ENCODE measurements at regions of chr2 and their contacts with region 1.

Region 1: DNA sequence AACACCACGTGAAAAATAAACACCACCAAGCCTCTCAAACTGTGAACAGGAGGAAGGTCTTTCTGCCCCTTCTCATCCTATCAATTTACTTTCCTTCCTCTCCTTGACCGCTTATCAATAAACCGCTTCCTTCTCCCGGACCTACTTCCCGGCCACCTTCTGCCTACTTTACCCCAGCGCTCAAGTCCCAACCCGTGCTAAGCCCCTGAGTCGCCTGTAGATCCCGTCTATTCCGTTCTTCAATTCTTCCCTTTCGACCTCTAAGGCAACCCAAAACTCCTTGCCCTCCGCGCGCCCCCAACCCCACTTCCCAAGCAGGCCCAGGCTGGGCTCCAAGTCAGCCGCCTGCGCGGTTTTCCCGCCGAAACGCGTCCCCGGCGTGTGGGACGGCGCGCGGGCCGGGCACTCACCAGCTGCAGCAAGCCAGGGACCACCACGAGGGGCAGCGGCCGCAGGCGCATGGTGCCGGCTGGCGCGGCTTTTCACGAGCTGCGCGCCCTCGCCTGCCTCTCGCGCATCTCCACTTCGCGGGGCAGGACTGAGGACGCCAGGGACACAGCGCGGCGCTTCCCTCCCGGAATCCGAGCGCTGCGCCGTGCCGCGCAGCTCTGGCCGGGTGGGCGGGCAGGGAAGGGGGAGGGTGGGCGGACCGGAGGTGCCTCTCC is at the start of gene NXPH2:
- DNase-seq: peak in 2 of 6 donors; percentile 52 to 61
- ATAC-seq: peak in 3 of 4 donors; percentile 46 to 57 (median 53)
- H3K4me3 ChIP-seq: peak within 1 kb of the TSS; percentile 7 to 48 (median 20)
- H3K27ac ChIP-seq: no peak within 1 kb of the TSS
- H3K4me1 ChIP-seq: peaks cover 0 to 5% (median 0%) of the 10 kb centered on the region in 3 donors
- H3K27me3 ChIP-seq: peaks cover 0 to 12% (median 2%) of the 10 kb centered on the region in 4 donors
- CTCF ChIP-seq: no peak
- total RNA-seq, gene NXPH2: 0.19 TPM in 1 of 6 donors, not detected in the others

Region 2: GRCh38 chr2:137910641-137911040 is 869.3 kb before region 1 on chr2:
- intact Hi-C with region 1: loop called in 2 of 3 experiments (anchors 5 to 10 kb)
- DNase-seq: no peak
- ATAC-seq: peak in 2 of 4 donors; percentile 44 to 49
- H3K4me3 ChIP-seq: no peak overlapping the region
- H3K27ac ChIP-seq: no peak overlapping the region
- H3K4me1 ChIP-seq: no peaks in the 10 kb centered on the region
- H3K27me3 ChIP-seq: no peaks in the 10 kb centered on the region
- CTCF ChIP-seq: peak in 3 of 4 donors; percentile 37 to 44 (median 43)

Region 3: DNA sequence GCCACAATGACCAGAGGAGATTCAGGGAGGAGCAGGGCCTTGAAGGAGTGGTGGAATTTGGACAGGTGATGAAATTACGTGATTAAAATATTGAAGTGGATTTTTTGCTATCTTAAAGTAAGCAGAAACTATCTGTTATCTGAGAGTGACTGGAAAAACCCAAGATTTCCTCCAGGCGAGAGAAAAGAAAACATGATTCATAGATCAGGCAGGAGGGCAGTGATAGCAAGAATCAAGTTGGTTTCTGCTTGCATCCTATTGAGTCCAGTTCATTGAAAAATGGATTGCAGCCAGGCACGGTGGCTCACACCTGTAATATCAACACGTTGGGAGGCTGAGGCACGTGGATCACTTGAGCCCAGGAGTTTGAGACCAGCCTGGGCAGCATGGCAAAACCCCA is 127.5 kb before region 1 on chr2:
- intact Hi-C with region 1: no loop called
- DNase-seq: no peak
- ATAC-seq: peak in 1 of 4 donors; percentile 60
- H3K4me3 ChIP-seq: no peak overlapping the region
- H3K27ac ChIP-seq: no peak overlapping the region
- H3K4me1 ChIP-seq: no peaks in the 10 kb centered on the region
- H3K27me3 ChIP-seq: no peaks in the 10 kb centered on the region
- CTCF ChIP-seq: no peak